Gastrocnemius medialis (tissue), 4 donors: ENCODE measurements at regions of chr2 and their contacts with region 1.

Region 1: GRCh38 chr2:170715062-170715931 is at the start of gene SP5:
- DNase-seq: no peak
- ATAC-seq: peak in 1 of 2 donors; percentile 14
- H3K4me3 ChIP-seq: peak within 1 kb of the TSS; percentile 44 to 63 (median 58)
- H3K27ac ChIP-seq: no peak within 1 kb of the TSS
- H3K4me1 ChIP-seq: peaks cover 4 to 16% of the 10 kb centered on the region in 2 donors
- H3K27me3 ChIP-seq: peaks cover 82 to 94% (median 86%) of the 10 kb centered on the region in 3 donors
- CTCF ChIP-seq: no peak
- POLR2A ChIP-seq: no peak
- total RNA-seq, gene SP5: 0.29 to 0.44 (median 0.39) TPM in 3 of 4 donors, not detected in the other

Region 2: GRCh38 chr2:170409164-170409535 is 306.1 kb before region 1 on chr2:
- in situ Hi-C with region 1: no loop called
- intact Hi-C with region 1: loop called (anchors 2 kb)
- DNase-seq: peak; percentile 24 to 38
- ATAC-seq: peak in 1 of 2 donors; percentile 53
- H3K4me3 ChIP-seq: peak overlapping the region in 1 of 4 donors; percentile 18
- H3K27ac ChIP-seq: no peak overlapping the region
- H3K4me1 ChIP-seq: no peaks in the 10 kb centered on the region
- H3K27me3 ChIP-seq: peaks cover 0 to 2% (median 0%) of the 10 kb centered on the region in 3 donors
- CTCF ChIP-seq: peak; percentile 70 to 82 (median 77)
- POLR2A ChIP-seq: no peak

Region 3: GRCh38 chr2:170486730-170487129 is 228.6 kb before region 1 on chr2:
- in situ Hi-C with region 1: no loop called
- intact Hi-C with region 1: loop called (anchors 5 kb)
- DNase-seq: no peak
- ATAC-seq: peak in 1 of 2 donors; percentile 80
- H3K4me3 ChIP-seq: no peak overlapping the region
- H3K27ac ChIP-seq: no peak overlapping the region
- H3K4me1 ChIP-seq: no peaks in the 10 kb centered on the region
- H3K27me3 ChIP-seq: no peaks in the 10 kb centered on the region
- CTCF ChIP-seq: peak in 3 of 5 experiments; percentile 11 to 33 (median 32)
- POLR2A ChIP-seq: no peak

Region 4: DNA sequence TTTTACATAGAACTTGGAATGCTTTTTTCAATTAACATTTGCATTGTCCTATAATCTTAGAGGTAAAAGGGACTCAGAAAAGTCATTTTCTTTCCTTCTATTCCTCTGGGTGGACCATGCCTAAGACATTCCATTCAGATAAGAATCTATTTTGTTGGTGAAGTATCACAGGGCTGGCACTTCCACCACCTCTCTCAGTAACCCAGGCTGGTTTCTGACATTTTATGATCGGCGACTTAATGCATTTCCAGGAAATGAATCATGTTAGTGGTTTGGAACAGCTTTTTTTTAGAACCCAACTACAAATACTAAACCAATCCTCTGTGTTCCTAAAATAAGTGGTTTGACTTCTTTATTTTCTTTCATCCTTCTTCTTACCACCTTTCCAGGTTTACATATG is 128.4 kb after region 1 on chr2:
- in situ Hi-C with region 1: no loop called
- intact Hi-C with region 1: no loop called
- DNase-seq: no peak
- ATAC-seq: no peak
- H3K4me3 ChIP-seq: no peak overlapping the region
- H3K27ac ChIP-seq: no peak overlapping the region
- H3K4me1 ChIP-seq: no peaks in the 10 kb centered on the region
- H3K27me3 ChIP-seq: peaks cover 0 to 3% (median 0%) of the 10 kb centered on the region in 3 donors
- CTCF ChIP-seq: no peak
- POLR2A ChIP-seq: no peak